ENCODE measurements at regions of chr11 and their contacts with region 1.

Region 1: GRCh38 chr11:82718307-82718706 is 15.4 kb downstream of the FAM181B start:
- DNase-seq: peak in 6 of 35 experiments; percentile 4 to 51 (median 7)
- ATAC-seq: peak in 3 of 4 experiments; percentile 36 to 52 (median 46)
- H3K4me3 ChIP-seq: no peak overlapping the region
- H3K4me3 Mint-ChIP-seq: no peak overlapping the region
- H3K27ac ChIP-seq: no peak overlapping the region
- H3K27ac Mint-ChIP-seq: no peak overlapping the region
- H3K4me1 ChIP-seq: no peaks in the 10 kb centered on the region
- H3K4me1 Mint-ChIP-seq: no peaks in the 10 kb centered on the region
- H3K27me3 ChIP-seq: peaks cover 0 to 9% of the 10 kb centered on the region in 2 experiments
- H3K27me3 Mint-ChIP-seq: peaks cover 2 to 3% of the 10 kb centered on the region in 2 donors

Region 2: DNA sequence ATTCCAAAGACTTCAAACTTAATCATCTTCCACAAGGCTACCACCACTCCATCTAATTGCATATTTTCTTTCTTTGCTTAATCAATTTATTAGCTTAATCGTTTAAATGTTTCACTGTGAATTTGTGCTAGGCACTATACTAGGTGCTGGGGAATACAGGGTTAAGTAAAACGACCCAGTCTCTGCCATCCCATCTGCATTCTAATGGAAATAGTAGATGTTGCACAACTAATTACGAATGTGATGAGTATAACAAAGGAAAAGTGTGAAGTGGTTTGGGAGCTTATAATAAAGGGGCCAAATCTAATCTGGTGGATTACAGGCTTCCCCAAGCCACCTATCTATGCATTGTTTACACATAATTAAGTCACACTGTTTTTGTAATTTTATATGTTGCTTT is 131.7 kb before region 1 on chr11:
- CTCF ChIA-PET with region 1: no interaction called
- POLR2A ChIA-PET with region 1: no interaction called
- DNase-seq: no peak
- ATAC-seq: no peak
- H3K4me3 ChIP-seq: no peak overlapping the region
- H3K4me3 Mint-ChIP-seq: no peak overlapping the region
- H3K27ac ChIP-seq: no peak overlapping the region
- H3K27ac Mint-ChIP-seq: no peak overlapping the region
- H3K4me1 ChIP-seq: no peaks in the 10 kb centered on the region
- H3K4me1 Mint-ChIP-seq: no peaks in the 10 kb centered on the region
- H3K27me3 ChIP-seq: no peaks in the 10 kb centered on the region
- H3K27me3 Mint-ChIP-seq: no peaks in the 10 kb centered on the region

Region 3: GRCh38 chr11:82837650-82838049 is 119.3 kb after region 1 on chr11:
- CTCF ChIA-PET with region 1: interaction called in 1 of 2 experiments, 4 read pairs
- POLR2A ChIA-PET with region 1: interaction called in 1 of 2 experiments, 11 read pairs
- DNase-seq: no peak
- ATAC-seq: no peak
- H3K4me3 ChIP-seq: no peak overlapping the region
- H3K4me3 Mint-ChIP-seq: no peak overlapping the region
- H3K27ac ChIP-seq: no peak overlapping the region
- H3K27ac Mint-ChIP-seq: no peak overlapping the region
- H3K4me1 ChIP-seq: no peaks in the 10 kb centered on the region
- H3K4me1 Mint-ChIP-seq: no peaks in the 10 kb centered on the region
- H3K27me3 ChIP-seq: no peaks in the 10 kb centered on the region
- H3K27me3 Mint-ChIP-seq: no peaks in the 10 kb centered on the region